Activated CD4-positive, alpha-beta T cell treated with anti-CD3 and anti-CD28 coated beads for 36 hours (primary cell): ENCODE measurements at regions of chr5 and their contacts with region 1.

Region 1: DNA sequence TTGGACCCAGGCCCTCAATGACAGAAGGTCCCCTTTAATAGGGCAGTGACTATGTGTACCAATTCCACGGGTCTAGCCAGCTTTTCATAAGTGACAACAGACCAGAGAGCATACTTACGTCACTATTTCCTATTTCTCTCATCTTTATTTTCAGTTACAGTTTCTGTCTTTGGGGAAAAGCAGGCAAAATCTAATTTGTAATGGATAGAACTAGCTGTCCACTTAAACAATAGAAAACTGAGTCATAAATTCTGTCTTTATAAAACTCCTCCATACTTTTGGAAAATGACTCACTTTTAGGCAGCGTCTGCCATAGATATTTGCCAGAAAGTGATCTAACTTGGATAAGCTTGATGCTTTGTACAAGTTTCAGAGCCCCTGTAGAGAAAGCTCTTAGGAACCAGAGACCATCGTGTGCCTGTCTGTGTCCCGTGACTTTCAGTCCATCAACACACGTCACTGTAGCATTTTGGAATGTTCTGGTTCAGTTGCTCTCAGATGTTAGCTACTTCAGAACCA is 101.9 kb downstream of the F2RL2 start:
- DNase-seq: no peak
- ATAC-seq: peak; percentile 85
- H3K4me3 Mint-ChIP-seq: no peak overlapping the region
- H3K27ac Mint-ChIP-seq: peak overlapping the region; percentile 91
- H3K4me1 Mint-ChIP-seq: peaks cover 67% of the 10 kb centered on the region
- H3K27me3 Mint-ChIP-seq: no peaks in the 10 kb centered on the region

Region 2: GRCh38 chr5:76269932-76270610 is 251.2 kb before region 1 on chr5:
- CTCF ChIA-PET with region 1: no interaction called
- POLR2A ChIA-PET with region 1: no interaction called
- intact Hi-C with region 1: no loop called
- DNase-seq: peak; percentile 67
- ATAC-seq: peak; percentile 78
- H3K4me3 Mint-ChIP-seq: peak overlapping the region; percentile 52
- H3K27ac Mint-ChIP-seq: peak overlapping the region; percentile 96
- H3K4me1 Mint-ChIP-seq: peaks cover 40% of the 10 kb centered on the region
- H3K27me3 Mint-ChIP-seq: peaks cover 7% of the 10 kb centered on the region

Region 3: DNA sequence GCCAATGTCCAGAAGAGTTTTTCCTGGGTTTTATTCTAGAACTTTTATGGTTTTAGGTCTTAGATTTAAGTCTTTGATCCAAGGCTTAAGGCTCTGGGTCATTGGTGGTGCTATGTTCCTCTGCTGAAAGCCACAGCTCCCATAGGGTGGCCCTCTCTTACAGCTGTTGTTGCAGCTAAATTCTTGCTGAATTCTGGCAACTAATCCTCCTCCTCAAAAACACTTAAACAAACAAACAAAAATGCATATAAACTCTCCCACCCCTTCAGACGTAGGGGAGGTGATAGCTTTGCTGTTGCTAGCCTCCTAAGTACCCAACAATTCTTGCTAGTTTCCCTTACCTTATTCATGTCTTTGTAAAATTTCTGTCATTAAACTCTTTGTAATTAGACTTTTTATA is 88.0 kb before region 1 on chr5:
- CTCF ChIA-PET with region 1: no interaction called
- POLR2A ChIA-PET with region 1: no interaction called
- intact Hi-C with region 1: no loop called
- DNase-seq: no peak
- ATAC-seq: no peak
- H3K4me3 Mint-ChIP-seq: no peak overlapping the region
- H3K27ac Mint-ChIP-seq: no peak overlapping the region
- H3K4me1 Mint-ChIP-seq: peaks cover 12% of the 10 kb centered on the region
- H3K27me3 Mint-ChIP-seq: no peaks in the 10 kb centered on the region

Region 4: GRCh38 chr5:76473661-76474060 is 47.6 kb before region 1 on chr5:
- CTCF ChIA-PET with region 1: interaction called, 3 read pairs
- POLR2A ChIA-PET with region 1: interaction called, 5 read pairs
- intact Hi-C with region 1: loop called in 1 of 2 experiments (anchors 1 kb)
- DNase-seq: peak; percentile 82
- ATAC-seq: peak; percentile 87
- H3K4me3 Mint-ChIP-seq: peak overlapping the region; percentile 16
- H3K27ac Mint-ChIP-seq: peak overlapping the region; percentile 92
- H3K4me1 Mint-ChIP-seq: peaks cover 75% of the 10 kb centered on the region
- H3K27me3 Mint-ChIP-seq: no peaks in the 10 kb centered on the region

Region 5: GRCh38 chr5:76582230-76583162 is 61.2 kb after region 1 on chr5:
- CTCF ChIA-PET with region 1: interaction called, 4 read pairs
- POLR2A ChIA-PET with region 1: no interaction called
- intact Hi-C with region 1: loop called in 1 of 2 experiments (anchors 2 kb)
- DNase-seq: peak; percentile 52
- ATAC-seq: peak; percentile 93
- H3K4me3 Mint-ChIP-seq: no peak overlapping the region
- H3K27ac Mint-ChIP-seq: peak overlapping the region; percentile 60
- H3K4me1 Mint-ChIP-seq: peaks cover 20% of the 10 kb centered on the region
- H3K27me3 Mint-ChIP-seq: no peaks in the 10 kb centered on the region

Region 6: DNA sequence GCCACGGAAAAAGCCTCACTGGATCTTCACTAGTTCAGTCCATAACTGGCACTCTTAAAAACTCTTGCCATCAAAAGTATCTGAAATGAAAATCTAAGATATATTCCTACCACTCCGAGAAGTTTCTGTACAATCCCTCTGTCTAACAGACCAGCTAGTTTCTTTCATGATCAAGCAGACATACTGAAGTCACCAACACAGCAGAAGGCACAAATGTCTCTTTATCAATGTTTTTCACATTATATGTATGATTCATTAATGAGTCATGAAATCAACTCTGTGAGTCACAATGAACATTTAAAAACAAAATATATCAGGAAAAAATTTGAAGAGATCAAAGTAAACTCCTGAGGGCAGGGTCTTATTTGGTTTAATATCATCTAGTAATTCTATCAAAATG is 245.4 kb after region 1 on chr5:
- CTCF ChIA-PET with region 1: no interaction called
- POLR2A ChIA-PET with region 1: no interaction called
- intact Hi-C with region 1: no loop called
- DNase-seq: no peak
- ATAC-seq: peak; percentile 36
- H3K4me3 Mint-ChIP-seq: no peak overlapping the region
- H3K27ac Mint-ChIP-seq: no peak overlapping the region
- H3K4me1 Mint-ChIP-seq: peaks cover 4% of the 10 kb centered on the region
- H3K27me3 Mint-ChIP-seq: no peaks in the 10 kb centered on the region